Activated B cell treated with CpG ODN at 0.5 μM for 24 hours (primary cell): ENCODE measurements at regions of chr4 and their contacts with region 1.

Region 1: GRCh38 chr4:781493-782216 is 44.3 kb downstream of the CPLX1 start:
- DNase-seq: peak; percentile 97
- ATAC-seq: peak; percentile 93
- H3K4me3 Mint-ChIP-seq: peak overlapping the region; percentile 91
- H3K27ac Mint-ChIP-seq: peak overlapping the region; percentile 87
- H3K4me1 Mint-ChIP-seq: peaks cover 47% of the 10 kb centered on the region
- H3K27me3 Mint-ChIP-seq: peaks cover 18% of the 10 kb centered on the region
- CTCF ChIP-seq: no peak

Region 2: DNA sequence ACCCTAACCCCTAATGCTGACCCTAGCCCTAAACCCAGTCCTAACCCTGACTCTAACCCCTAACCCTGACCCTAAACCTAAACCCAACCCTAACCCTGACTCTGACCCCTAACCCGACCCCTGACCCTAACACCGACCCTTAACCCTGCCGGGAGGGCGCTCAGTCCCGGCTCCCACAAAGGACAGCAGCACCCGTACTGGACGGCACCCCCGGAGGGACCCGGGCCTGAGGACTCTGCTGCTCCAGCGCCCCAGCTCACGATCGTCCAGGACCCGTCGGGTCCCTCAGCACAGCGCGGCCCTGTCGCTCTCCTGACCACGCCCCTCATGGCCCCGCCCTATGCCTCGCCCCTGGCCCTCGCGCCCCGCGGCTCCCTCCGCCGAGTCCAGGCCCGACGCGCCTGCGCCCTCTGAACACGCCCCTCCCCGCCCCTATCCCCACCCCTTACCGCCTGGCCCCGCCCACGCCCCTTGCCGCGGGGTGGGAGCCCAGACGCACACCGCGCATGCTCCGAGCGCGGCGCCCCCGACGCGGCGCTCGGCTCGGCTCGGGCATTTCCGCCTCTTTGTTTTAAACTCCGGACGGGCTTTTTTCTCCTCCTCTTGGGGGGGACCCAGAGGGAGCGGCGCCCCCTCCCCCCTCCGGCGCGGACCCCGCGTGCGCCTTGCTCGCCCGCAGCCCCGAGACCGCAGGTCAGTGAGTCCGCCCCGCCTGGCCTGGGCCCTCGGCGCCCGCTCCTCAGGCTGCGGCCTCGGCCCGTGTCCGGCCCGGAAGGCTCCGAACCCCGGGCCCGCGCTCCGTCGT is 76.2 kb before region 1 on chr4 and contains the start of gene PCGF3:
- CTCF ChIA-PET with region 1: no interaction called
- POLR2A ChIA-PET with region 1: no interaction called
- intact Hi-C with region 1: loop called (anchors 1 kb)
- DNase-seq: peak; percentile 95
- ATAC-seq: peak; percentile 97
- H3K4me3 Mint-ChIP-seq: peak within 1 kb of the TSS; percentile 87
- H3K27ac Mint-ChIP-seq: peak within 1 kb of the TSS; percentile 76
- H3K4me1 Mint-ChIP-seq: peaks cover 35% of the 10 kb centered on the region
- H3K27me3 Mint-ChIP-seq: no peaks in the 10 kb centered on the region
- CTCF ChIP-seq: no peak
- total RNA-seq, gene PCGF3: 51.3 and 59.2 TPM in 2 replicates

Region 3: DNA sequence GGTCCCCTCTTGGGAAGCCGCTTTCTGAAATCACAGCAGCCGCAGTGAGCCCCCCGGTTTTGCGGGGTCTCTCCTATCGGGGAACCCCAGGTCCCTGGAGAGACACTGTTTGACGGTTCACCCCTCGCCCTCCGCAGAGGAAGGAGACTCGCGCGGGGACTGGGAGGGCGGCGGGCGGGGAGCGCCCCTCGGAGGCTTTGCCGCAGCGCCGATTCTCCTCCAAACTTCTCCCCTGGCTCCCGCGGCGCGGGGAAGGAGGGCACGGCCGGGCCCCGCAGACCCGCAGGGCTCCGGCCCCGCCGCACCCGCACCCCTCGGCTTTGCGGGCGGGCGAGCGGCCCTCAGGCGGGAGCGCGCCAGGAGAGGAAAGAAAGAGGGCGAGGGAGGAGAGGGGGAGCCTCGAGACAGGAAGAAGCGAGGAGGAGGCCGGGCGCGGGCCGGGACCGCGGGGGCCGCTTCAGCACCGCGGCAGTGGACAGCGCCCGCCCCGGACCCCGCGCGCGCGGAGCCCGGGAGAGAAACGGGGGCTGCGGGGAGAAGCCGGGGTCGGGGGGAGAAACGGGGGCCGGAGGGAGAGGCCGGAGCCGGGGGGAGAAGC is 43.7 kb after region 1 on chr4:
- CTCF ChIA-PET with region 1: no interaction called
- POLR2A ChIA-PET with region 1: no interaction called
- intact Hi-C with region 1: loop called (anchors 5 kb)
- DNase-seq: peak; percentile 34
- ATAC-seq: peak; percentile 72
- H3K4me3 Mint-ChIP-seq: peak overlapping the region; percentile 24
- H3K27ac Mint-ChIP-seq: no peak overlapping the region
- H3K4me1 Mint-ChIP-seq: peaks cover 1% of the 10 kb centered on the region
- H3K27me3 Mint-ChIP-seq: peaks cover 48% of the 10 kb centered on the region
- CTCF ChIP-seq: no peak

Region 4: DNA sequence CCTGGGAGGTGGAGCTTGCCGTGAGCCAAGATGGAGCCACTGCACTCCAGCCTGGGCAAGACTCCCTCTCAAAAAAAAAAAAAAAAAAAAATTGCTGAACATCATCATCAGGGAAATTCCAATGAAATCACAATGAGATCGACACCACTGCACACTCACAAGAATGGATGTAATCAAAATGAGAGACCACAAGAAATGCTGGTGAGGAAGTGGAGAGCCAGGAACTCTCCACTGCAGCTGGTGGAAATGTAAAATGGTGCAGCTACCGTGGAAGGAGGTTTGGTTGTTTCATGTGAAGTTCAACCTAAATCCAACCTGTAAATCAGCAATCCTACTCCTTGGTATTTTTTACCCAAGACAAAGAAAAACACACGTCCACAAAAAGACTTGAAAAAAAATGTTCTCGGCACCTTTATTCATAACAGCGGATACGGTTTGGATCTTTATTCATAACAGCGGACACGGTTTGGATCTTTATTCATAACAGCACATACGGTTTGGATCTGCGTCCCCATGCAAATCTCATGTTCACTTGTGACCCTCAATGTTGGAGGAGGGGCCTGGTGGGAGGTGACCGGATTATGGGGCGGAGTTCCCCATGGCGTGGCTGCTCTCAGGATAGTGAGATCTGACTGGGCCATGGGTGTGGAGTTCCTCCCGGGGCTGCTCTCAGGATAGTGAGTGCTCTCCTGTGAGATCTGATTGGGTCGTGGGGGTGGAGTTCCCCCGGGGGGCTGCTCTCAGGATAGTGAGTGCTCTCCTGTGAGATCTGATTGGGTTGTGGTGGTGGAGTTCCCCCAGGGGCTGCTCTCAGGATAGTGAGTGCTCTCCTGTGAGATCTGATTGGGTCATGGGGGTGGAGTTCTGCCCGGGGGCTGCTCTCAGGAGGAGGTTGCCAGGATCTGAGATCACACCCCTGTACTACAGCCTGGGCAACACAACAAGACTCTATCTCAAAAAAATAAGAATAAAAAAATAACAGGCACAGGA is 142.7 kb after region 1 on chr4:
- CTCF ChIA-PET with region 1: no interaction called
- POLR2A ChIA-PET with region 1: interaction called, 14 read pairs
- intact Hi-C with region 1: no loop called
- DNase-seq: no peak
- ATAC-seq: peak; percentile 37
- H3K4me3 Mint-ChIP-seq: peak overlapping the region; percentile 29
- H3K27ac Mint-ChIP-seq: peak overlapping the region; percentile 70
- H3K4me1 Mint-ChIP-seq: peaks cover 78% of the 10 kb centered on the region
- H3K27me3 Mint-ChIP-seq: no peaks in the 10 kb centered on the region
- CTCF ChIP-seq: no peak

Region 5: DNA sequence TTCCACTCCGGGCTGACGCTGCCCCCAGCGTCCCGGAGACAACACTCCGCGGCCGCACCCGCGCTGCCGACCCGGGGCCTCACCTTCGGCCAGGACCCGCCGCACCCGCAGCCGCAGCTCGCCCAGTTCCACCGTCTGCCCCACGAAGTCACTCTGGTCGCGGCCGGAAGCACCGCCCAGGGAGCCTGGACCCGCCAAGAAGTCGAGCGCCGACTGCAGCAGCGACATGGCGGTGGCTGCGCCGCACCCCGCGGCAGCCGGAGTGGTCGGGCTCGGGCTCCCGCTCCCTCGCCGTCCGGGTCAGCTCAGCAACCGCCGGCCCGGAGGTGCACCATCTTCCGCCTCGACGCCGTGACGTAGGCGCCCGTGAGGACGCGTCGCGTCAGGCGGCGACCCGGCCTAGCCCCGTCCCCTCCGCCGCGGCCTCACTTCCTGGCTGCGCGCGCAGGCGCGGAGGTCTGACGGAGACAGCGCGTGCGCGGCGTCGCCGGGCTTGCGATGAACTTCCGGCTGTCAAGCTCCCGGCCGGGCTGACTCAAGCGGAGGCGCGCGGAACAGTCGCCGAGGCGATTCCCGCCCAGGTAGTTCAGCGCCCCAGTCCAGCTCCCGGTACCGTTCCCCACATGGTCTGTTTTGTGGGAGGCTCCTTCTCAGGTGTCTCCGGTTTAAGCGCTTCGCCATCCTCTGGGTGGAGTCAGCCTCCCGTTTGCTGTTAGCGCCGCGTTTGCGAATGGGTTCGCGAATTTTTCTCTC is 150.5 kb after region 1 on chr4 and contains the starts of genes GAK and TMEM175:
- CTCF ChIA-PET with region 1: no interaction called
- POLR2A ChIA-PET with region 1: interaction called, 9 read pairs
- intact Hi-C with region 1: loop called (anchors 2 kb)
- DNase-seq: peak; percentile 99
- ATAC-seq: peak; percentile 90
- H3K4me3 Mint-ChIP-seq: peak within 1 kb of the TSS; percentile 93
- H3K27ac Mint-ChIP-seq: peak within 1 kb of the TSS; percentile 92
- H3K4me1 Mint-ChIP-seq: peaks cover 78% of the 10 kb centered on the region
- H3K27me3 Mint-ChIP-seq: no peaks in the 10 kb centered on the region
- CTCF ChIP-seq: no peak
- total RNA-seq, gene GAK: 159 and 172 TPM in 2 replicates
- total RNA-seq, gene TMEM175: 24.5 and 28.8 TPM in 2 replicates

Region 6: GRCh38 chr4:973431-974397 is 192.1 kb after region 1 on chr4 and contains the start of gene DGKQ:
- CTCF ChIA-PET with region 1: no interaction called
- POLR2A ChIA-PET with region 1: no interaction called
- intact Hi-C with region 1: loop called (anchors 1 kb)
- DNase-seq: peak; percentile 87
- ATAC-seq: peak; percentile 98
- H3K4me3 Mint-ChIP-seq: peak within 1 kb of the TSS; percentile 60
- H3K27ac Mint-ChIP-seq: no peak within 1 kb of the TSS
- H3K4me1 Mint-ChIP-seq: peaks cover 13% of the 10 kb centered on the region
- H3K27me3 Mint-ChIP-seq: no peaks in the 10 kb centered on the region
- CTCF ChIP-seq: no peak
- total RNA-seq, gene DGKQ: 16.3 and 16.4 TPM in 2 replicates

Region 7: GRCh38 chr4:2008875-2009703 is 1227.4 kb after region 1 on chr4 and contains the start of gene NELFA:
- CTCF ChIA-PET with region 1: no interaction called
- POLR2A ChIA-PET with region 1: no interaction called
- intact Hi-C with region 1: loop called (anchors 5 kb)
- DNase-seq: peak; percentile 93
- ATAC-seq: peak; percentile 80
- H3K4me3 Mint-ChIP-seq: peak within 1 kb of the TSS; percentile 90
- H3K27ac Mint-ChIP-seq: peak within 1 kb of the TSS; percentile 91
- H3K4me1 Mint-ChIP-seq: peaks cover 32% of the 10 kb centered on the region
- H3K27me3 Mint-ChIP-seq: peaks cover 4% of the 10 kb centered on the region
- CTCF ChIP-seq: no peak
- total RNA-seq, gene NELFA: 44.7 and 49.9 TPM in 2 replicates